Activated naive CD4-positive, alpha-beta T cell treated with anti-CD3 and anti-CD28 coated beads for 36 hours (primary cell): ENCODE measurements at regions of chr17 and their contacts with region 1.

Region 1: GRCh38 chr17:27805520-27806146 is 5.3 kb upstream of the NOS2 start:
- DNase-seq: peak; percentile 93
- H3K4me3 Mint-ChIP-seq: peak overlapping the region; percentile 46
- H3K27ac Mint-ChIP-seq: peak overlapping the region; percentile 77
- H3K4me1 Mint-ChIP-seq: peaks cover 41% of the 10 kb centered on the region
- H3K27me3 Mint-ChIP-seq: no peaks in the 10 kb centered on the region

Region 2: GRCh38 chr17:27323524-27324206 is 482.0 kb before region 1 on chr17:
- CTCF ChIA-PET with region 1: no interaction called
- intact Hi-C with region 1: no loop called
- DNase-seq: no peak
- H3K4me3 Mint-ChIP-seq: no peak overlapping the region
- H3K27ac Mint-ChIP-seq: no peak overlapping the region
- H3K4me1 Mint-ChIP-seq: no peaks in the 10 kb centered on the region
- H3K27me3 Mint-ChIP-seq: peaks cover 3% of the 10 kb centered on the region

Region 3: GRCh38 chr17:27473748-27474609 is 331.7 kb before region 1 on chr17:
- CTCF ChIA-PET with region 1: interaction called, 4 read pairs
- intact Hi-C with region 1: loop called (anchors 5 kb)
- DNase-seq: peak; percentile 94
- H3K4me3 Mint-ChIP-seq: peak overlapping the region; percentile 45
- H3K27ac Mint-ChIP-seq: peak overlapping the region; percentile 97
- H3K4me1 Mint-ChIP-seq: peaks cover 93% of the 10 kb centered on the region
- H3K27me3 Mint-ChIP-seq: no peaks in the 10 kb centered on the region

Region 4: DNA sequence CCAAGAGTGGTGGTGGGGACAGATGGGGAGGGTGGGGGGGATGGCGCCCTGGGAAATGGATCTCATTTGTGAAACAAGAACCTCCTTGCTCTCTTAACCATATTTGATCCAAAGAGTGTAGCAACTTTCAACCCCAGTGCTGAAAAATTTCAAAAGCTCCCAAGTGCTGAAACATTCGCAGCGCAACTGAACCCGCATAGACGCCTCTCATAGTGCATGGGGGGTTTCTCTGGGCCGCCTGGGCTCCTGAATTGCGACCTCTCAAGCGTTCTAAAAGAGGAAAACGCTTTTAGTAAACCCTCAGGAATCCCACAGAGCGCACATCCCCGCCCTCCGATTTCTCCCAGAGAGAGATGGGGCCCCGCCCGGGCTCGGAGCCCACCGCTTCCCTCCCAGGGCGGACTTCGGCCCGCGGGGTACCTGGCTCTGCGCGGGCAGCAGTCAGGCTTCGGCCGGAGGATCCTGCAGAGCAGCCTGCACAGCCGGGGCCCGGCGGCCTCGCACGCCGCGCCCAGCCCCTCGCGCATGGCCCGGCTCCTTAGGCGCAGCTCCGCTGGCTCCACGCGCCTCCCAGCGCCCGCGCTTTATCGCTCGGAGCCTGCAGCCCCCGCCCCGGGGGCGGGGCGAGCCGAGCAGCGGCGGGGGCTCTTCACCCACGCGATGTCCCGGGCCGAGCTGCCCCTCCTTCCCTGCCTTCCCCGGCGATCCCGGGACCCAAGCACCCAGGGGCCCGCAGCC is 12.3 kb before region 1 on chr17:
- CTCF ChIA-PET with region 1: interaction called, 40 read pairs
- intact Hi-C with region 1: no loop called
- DNase-seq: no peak
- H3K4me3 Mint-ChIP-seq: no peak overlapping the region
- H3K27ac Mint-ChIP-seq: no peak overlapping the region
- H3K4me1 Mint-ChIP-seq: peaks cover 2% of the 10 kb centered on the region
- H3K27me3 Mint-ChIP-seq: peaks cover 37% of the 10 kb centered on the region

Region 5: DNA sequence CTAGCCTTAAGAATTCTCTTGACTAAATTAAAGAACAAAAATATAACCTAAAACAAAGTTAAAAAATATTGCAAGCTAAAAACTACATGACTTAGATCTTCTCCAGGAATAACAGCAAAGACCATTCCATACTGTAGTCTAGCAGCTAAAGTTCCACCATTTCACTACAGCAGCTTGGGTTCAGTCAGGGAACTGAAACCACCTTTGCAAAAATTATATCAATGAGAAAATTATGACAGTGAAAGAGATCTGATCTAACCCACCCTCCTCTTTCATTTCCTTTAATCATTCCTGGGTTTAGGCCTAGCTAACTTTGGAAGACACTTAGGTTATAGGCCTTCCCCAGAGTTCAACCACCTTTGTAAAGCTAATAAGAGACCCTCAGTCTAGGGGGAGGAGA is 31.0 kb after region 1 on chr17:
- CTCF ChIA-PET with region 1: interaction called, 14 read pairs
- intact Hi-C with region 1: no loop called
- DNase-seq: no peak
- H3K4me3 Mint-ChIP-seq: no peak overlapping the region
- H3K27ac Mint-ChIP-seq: no peak overlapping the region
- H3K4me1 Mint-ChIP-seq: no peaks in the 10 kb centered on the region
- H3K27me3 Mint-ChIP-seq: no peaks in the 10 kb centered on the region

Region 6: GRCh38 chr17:27858621-27859305 is 53.1 kb after region 1 on chr17:
- CTCF ChIA-PET with region 1: interaction called, 13 read pairs
- intact Hi-C with region 1: no loop called
- DNase-seq: no peak
- H3K4me3 Mint-ChIP-seq: no peak overlapping the region
- H3K27ac Mint-ChIP-seq: no peak overlapping the region
- H3K4me1 Mint-ChIP-seq: peaks cover 7% of the 10 kb centered on the region
- H3K27me3 Mint-ChIP-seq: no peaks in the 10 kb centered on the region

Region 7: GRCh38 chr17:27892866-27893769 is 87.5 kb after region 1 on chr17 and contains the start of gene LYRM9:
- CTCF ChIA-PET with region 1: interaction called, 83 read pairs
- intact Hi-C with region 1: loop called (anchors 1 kb)
- DNase-seq: peak; percentile 92
- H3K4me3 Mint-ChIP-seq: peak within 1 kb of the TSS; percentile 75
- H3K27ac Mint-ChIP-seq: peak within 1 kb of the TSS; percentile 6
- H3K4me1 Mint-ChIP-seq: peaks cover 18% of the 10 kb centered on the region
- H3K27me3 Mint-ChIP-seq: peaks cover 7% of the 10 kb centered on the region
- total RNA-seq, gene LYRM9: 5.3 to 6.9 TPM

Region 8: DNA sequence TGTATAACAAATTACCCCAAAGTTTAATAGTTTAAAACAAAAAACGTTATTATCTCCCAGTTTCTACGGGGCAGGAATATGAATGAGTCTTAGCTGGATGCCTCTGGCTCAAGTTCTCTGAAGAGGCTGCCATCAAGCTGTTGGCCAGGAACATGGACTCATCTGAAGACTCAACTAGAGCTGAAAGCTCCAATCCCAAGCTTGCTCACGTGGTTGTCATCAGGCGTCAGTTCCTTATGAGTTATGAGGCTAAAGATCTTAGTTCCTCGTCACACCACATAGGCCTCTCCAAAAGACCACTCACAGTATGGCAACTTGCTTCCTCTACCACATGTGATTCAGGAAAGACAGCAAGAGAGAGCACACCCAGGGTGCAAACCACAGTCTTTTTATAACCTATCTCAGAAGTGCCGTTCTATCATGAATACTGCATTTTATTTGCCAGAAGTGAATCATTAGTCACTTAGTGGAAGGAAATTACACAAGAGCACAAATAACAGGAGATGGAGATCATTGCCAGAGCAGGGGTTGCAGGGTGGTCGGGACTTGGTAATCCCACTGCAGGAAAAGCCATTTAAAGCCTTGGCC is 188.2 kb after region 1 on chr17:
- CTCF ChIA-PET with region 1: no interaction called
- intact Hi-C with region 1: no loop called
- DNase-seq: no peak
- H3K4me3 Mint-ChIP-seq: no peak overlapping the region
- H3K27ac Mint-ChIP-seq: no peak overlapping the region
- H3K4me1 Mint-ChIP-seq: no peaks in the 10 kb centered on the region
- H3K27me3 Mint-ChIP-seq: peaks cover 3% of the 10 kb centered on the region

Region 9: DNA sequence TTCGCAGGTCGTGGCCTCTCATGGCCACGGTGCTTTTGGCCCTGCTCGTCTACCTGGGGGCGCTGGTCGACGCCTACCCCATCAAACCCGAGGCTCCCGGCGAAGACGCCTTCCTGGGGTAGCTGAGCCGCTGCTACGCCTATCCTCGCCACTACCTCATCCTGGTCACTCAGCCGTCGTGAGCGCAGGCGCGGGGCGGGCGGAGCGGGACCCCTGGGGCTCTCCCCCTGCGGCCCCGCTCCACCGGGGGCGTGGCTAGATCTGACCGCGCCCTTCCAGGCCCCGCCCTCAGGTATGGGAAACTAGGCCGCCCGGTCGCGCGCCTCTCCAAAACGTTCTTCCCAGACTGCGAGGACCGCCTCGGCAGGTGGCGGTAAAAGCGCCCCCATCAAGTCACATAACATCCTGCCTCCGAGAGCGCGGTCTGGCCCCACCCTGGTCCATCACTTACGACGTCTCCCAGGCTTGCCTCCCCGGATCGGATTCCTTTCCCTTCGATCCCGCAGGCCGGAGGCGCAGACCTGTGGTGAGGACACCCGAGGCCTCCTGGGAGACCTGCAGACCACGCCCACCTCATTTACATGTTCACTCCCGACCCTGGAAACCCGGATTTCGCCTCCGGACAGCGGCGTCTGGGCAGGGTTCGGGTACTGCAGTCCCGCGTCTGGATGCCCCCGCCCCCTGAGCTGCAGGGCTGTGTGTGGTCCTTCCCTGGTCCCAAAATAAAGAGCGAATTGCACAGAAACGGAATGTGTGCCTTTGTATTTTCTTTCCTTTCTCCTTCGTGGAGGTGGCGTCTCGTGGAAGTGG is 421.9 kb after region 1 on chr17:
- CTCF ChIA-PET with region 1: no interaction called
- intact Hi-C with region 1: no loop called
- DNase-seq: peak; percentile 38
- H3K4me3 Mint-ChIP-seq: peak overlapping the region; percentile 69
- H3K27ac Mint-ChIP-seq: no peak overlapping the region
- H3K4me1 Mint-ChIP-seq: peaks cover 5% of the 10 kb centered on the region
- H3K27me3 Mint-ChIP-seq: peaks cover 37% of the 10 kb centered on the region

Region 10: DNA sequence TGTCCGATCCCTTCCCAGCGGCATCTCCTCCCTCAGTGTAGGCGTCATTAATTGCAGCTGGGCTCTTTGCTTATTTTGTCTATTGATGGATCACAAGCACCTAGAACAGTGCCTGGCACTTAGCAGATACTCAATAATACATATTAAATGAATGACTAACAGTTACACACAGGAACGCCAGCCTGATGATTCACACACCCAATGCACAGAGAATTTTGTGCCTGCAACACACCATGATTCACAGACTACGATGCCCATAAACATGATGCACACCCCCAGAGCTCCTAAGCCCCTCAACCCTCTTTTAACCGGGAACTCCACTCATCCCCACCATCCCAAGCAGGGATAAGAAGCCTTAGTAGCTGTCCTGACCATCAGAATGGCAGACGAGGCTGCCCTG is 446.8 kb after region 1 on chr17:
- CTCF ChIA-PET with region 1: interaction called, 5 read pairs
- intact Hi-C with region 1: loop called (anchors 1 kb)
- DNase-seq: no peak
- H3K4me3 Mint-ChIP-seq: no peak overlapping the region
- H3K27ac Mint-ChIP-seq: no peak overlapping the region
- H3K4me1 Mint-ChIP-seq: peaks cover 5% of the 10 kb centered on the region
- H3K27me3 Mint-ChIP-seq: peaks cover 4% of the 10 kb centered on the region